PC-9 (cell line): ENCODE measurements at regions of chr4 and their contacts with region 1.

Region 1: DNA sequence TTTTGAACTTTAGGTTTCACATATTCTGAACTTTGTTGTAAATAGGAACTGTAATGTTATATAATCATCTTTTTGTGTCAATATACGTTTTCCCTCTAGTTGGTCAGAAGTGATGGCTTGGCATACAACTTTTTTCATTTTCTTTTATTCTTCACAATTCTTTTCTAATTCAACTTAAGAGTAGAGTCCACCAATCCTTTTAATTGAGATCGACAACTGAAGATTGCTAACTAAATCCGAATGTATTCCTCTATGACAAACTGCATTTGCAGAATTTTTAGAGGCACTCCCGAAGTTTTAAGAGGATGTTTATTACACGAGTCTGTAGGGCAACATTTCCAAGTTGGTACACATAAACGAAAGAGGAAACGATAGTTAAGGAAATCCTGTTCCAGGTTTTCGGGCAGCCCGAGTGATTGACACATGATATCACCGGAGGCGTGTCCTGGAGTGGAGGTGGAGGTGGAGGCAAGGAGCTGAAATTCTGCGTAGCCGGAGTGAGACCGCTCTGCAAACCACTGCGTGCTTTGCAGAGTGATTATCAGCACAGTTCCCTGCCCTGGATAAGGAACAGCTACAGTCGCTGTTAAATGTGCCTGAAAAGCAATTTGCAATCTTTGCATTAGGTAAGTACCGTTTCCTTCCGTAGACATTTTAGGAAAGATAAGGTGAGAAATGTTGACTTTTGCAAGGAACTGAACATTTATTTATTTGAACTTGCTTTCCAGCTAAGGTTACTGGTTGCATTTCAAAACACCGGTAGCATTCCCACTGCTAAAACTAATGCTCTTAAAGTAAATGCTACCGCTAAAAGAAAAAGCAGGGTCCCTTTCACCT is at the start of gene SPRY1:
- DNase-seq: peak; percentile 83 to 92
- H3K4me3 ChIP-seq: peak within 1 kb of the TSS; percentile 86
- H3K27ac ChIP-seq: peak within 1 kb of the TSS; percentile 83
- H3K4me1 ChIP-seq: peaks cover 17% of the 10 kb centered on the region
- H3K27me3 ChIP-seq: no peaks in the 10 kb centered on the region
- CTCF ChIP-seq: no peak
- total RNA-seq, gene SPRY1: 13.1 and 18.3 TPM in 2 replicates

Region 2: GRCh38 chr4:123127218-123127617 is 269.3 kb before region 1 on chr4:
- CTCF ChIA-PET with region 1: no interaction called
- POLR2A ChIA-PET with region 1: no interaction called
- intact Hi-C with region 1: loop called (anchors 5 kb)
- DNase-seq: peak in 1 of 2 experiments; percentile 30
- H3K4me3 ChIP-seq: no peak overlapping the region
- H3K27ac ChIP-seq: no peak overlapping the region
- H3K4me1 ChIP-seq: peaks cover 4% of the 10 kb centered on the region; the same call in 1 of the 2 replicates
- H3K27me3 ChIP-seq: no peaks in the 10 kb centered on the region
- CTCF ChIP-seq: peak; percentile 62

Region 3: GRCh38 chr4:123430031-123430430 is 33.5 kb after region 1 on chr4:
- CTCF ChIA-PET with region 1: no interaction called
- POLR2A ChIA-PET with region 1: no interaction called
- intact Hi-C with region 1: no loop called
- DNase-seq: no peak
- H3K4me3 ChIP-seq: no peak overlapping the region
- H3K27ac ChIP-seq: no peak overlapping the region
- H3K4me1 ChIP-seq: no peaks in the 10 kb centered on the region
- H3K27me3 ChIP-seq: no peaks in the 10 kb centered on the region
- CTCF ChIP-seq: no peak

Region 4: DNA sequence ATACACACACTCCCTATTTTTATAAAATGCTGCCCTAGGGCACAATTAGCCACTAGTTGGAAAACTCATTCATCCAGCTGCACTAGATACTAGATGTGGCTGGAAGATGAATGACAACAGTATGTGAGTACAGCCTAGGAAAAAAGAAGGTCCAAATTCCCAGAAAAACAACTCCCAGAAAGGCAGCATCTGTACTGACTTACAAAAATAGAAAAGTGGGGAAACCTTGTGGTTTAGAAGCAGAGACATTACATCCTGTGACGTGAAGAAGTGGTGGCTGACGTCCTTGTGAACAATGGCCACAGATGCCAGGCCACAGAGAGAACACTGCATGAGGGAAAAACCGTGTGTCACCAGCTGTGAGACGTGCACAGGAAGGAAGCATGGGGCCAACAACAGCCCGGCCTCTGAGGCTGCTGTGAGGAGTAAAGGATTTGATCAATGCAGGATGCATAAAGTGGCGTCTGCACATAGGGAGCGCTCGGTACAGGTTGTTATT is 81.2 kb after region 1 on chr4:
- CTCF ChIA-PET with region 1: interaction called, 4 read pairs
- POLR2A ChIA-PET with region 1: no interaction called
- intact Hi-C with region 1: loop called (anchors 1 kb)
- DNase-seq: no peak
- H3K4me3 ChIP-seq: no peak overlapping the region
- H3K27ac ChIP-seq: peak overlapping the region; percentile 96; the same call in 1 of the 2 replicates
- H3K4me1 ChIP-seq: peaks cover 31% of the 10 kb centered on the region
- H3K27me3 ChIP-seq: no peaks in the 10 kb centered on the region
- CTCF ChIP-seq: no peak

Region 5: DNA sequence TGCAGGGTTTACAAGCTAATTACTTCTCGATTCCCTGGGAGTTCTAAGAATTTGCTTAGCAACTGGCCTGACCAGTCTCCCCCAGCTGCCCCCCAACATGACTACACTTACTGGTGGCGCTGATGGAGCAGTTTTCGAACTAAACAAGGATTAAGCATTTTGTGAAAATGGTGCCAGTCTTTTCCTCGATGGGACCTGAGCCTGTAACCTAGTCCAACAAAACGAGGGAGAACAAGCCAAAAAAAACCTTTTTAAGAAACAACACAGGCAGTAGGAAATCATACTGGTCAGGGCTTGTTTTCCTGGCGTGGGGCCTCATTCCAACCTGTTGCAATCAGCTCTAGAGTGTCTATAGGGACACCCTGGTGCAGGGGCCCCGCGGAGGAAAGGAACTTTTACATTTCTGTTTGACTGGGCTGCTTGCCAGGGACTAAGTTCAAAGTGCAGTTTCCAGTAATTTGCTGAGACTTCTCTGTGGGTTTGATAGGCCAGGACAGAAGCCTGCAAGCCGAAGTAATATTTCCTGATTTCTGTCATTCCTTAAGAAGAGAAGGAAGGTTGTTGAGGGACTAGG is 158.8 kb after region 1 on chr4:
- CTCF ChIA-PET with region 1: interaction called, 8 read pairs
- POLR2A ChIA-PET with region 1: interaction called, 4 read pairs
- intact Hi-C with region 1: loop called (anchors 1 kb)
- DNase-seq: peak; percentile 86 to 90
- H3K4me3 ChIP-seq: no peak overlapping the region
- H3K27ac ChIP-seq: peak overlapping the region; percentile 67
- H3K4me1 ChIP-seq: peaks cover 38% of the 10 kb centered on the region
- H3K27me3 ChIP-seq: no peaks in the 10 kb centered on the region
- CTCF ChIP-seq: no peak

Region 6: GRCh38 chr4:124322234-124323065 is 925.9 kb after region 1 on chr4:
- CTCF ChIA-PET with region 1: no interaction called
- POLR2A ChIA-PET with region 1: no interaction called
- intact Hi-C with region 1: loop called (anchors 2 kb)
- DNase-seq: no peak
- H3K4me3 ChIP-seq: no peak overlapping the region
- H3K27ac ChIP-seq: no peak overlapping the region
- H3K4me1 ChIP-seq: no peaks in the 10 kb centered on the region
- H3K27me3 ChIP-seq: no peaks in the 10 kb centered on the region
- CTCF ChIP-seq: peak; percentile 82